ENCODE measurements at regions of chr5 and their contacts with region 1.

Region 1: GRCh38 chr5:45521067-45521466 is 175.1 kb downstream of the HCN1 start:
- DNase-seq: no peak

Region 2: DNA sequence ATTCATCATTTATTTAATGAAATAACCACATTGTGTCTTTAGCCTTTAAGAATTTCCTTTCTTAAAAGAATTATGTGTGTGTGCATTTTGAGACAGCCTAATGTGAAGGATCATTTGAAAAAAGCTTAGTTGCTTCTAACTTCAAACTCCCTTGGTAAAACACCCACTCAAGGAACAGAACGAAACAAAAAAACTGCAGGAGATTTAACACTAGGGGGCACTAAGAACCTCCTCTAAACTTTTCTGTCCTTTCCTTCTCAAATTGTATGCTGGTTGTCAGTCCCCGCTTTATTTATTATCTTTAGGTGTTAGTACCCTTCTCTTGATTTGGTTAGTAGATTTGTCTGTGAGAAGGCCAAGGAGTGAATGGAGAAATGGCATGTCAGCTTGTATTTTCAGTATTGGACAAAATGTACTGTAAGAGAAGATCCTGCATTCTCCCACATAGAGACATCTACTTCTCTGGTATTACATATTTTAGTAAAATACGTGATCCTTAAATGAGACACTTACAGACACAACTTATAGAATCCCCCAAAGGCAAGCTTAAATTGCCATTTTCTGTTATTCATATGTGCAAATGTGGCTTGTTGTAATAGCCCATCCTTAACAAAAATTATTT is 482.6 kb before region 1 on chr5:
- intact Hi-C with region 1: loop called (anchors 2 kb)
- DNase-seq: no peak

Region 3: GRCh38 chr5:45417285-45417996 is 103.6 kb before region 1 on chr5:
- intact Hi-C with region 1: no loop called
- DNase-seq: no peak

Region 4: GRCh38 chr5:45696206-45696836 is 175.3 kb after region 1 on chr5 and contains the start of gene HCN1:
- intact Hi-C with region 1: no loop called
- DNase-seq: peak; percentile 74
- total RNA-seq, gene HCN1: not detected

Measured in cardiac septum (tissue), 1 donor.